ENCODE measurements at regions of chr17 and their contacts with region 1.

Region 1: GRCh38 chr17:55549140-55549539 is 37.9 kb upstream of the SMIM36 start:
- DNase-seq: peak; percentile 47
- H3K4me3 Mint-ChIP-seq: no peak overlapping the region
- H3K27ac Mint-ChIP-seq: no peak overlapping the region
- H3K4me1 Mint-ChIP-seq: peaks cover 16% of the 10 kb centered on the region
- H3K27me3 Mint-ChIP-seq: no peaks in the 10 kb centered on the region
- CTCF ChIP-seq: no peak

Region 2: DNA sequence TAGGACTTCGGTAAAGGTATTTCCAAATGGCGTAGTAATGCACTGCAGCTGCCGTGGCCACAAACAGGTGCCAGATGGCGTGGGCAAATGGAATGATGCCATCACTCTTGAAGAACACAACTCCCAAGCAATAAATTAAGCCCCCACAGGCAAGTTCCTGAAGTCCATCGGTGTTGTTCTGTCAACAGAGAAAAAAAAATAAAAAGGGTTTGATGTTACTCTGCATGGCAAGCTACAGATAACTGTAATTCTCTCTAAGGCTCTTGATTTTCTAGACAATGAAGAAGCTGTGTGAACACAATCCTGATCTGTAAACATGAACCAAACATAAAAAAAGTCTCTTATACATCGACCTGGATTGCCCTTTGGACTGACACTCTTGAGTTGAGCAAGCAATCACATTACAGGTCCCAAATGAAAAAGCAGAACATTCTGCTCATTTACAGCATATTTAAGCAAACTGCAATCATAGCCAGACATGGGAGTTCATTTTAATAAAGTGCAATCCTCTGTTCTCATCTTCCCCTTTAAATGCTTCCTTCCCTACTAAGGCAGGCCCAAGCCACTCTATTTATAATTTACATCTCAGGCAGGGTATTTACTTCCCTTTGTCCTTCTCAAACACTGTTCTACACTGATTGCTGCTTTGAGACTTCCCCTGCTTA is 154.7 kb before region 1 on chr17:
- CTCF ChIA-PET with region 1: no interaction called
- POLR2A ChIA-PET with region 1: no interaction called
- intact Hi-C with region 1: no loop called
- DNase-seq: no peak
- H3K4me3 Mint-ChIP-seq: no peak overlapping the region
- H3K27ac Mint-ChIP-seq: no peak overlapping the region
- H3K4me1 Mint-ChIP-seq: no peaks in the 10 kb centered on the region
- H3K27me3 Mint-ChIP-seq: no peaks in the 10 kb centered on the region
- CTCF ChIP-seq: no peak

Region 3: DNA sequence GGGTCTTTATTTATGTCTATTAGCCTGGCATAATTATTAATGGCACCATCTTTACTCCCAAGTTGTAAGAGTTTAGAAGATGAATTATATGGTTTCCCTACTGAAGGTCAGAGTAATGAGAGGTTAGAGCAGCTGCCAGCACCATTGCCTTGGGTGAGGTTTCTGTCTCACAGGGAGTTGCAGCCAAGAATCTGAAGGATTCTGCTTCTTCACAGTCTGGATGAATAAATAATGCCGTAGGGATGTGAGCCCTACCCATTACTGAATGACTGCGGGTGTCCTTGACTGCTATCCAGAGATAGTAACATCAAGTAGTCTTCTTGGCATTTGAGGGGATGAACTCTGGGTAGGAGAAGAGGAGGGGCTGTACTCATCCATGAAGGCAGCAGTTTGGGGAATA is 14.9 kb after region 1 on chr17:
- CTCF ChIA-PET with region 1: no interaction called
- POLR2A ChIA-PET with region 1: no interaction called
- intact Hi-C with region 1: no loop called
- DNase-seq: no peak
- H3K4me3 Mint-ChIP-seq: no peak overlapping the region
- H3K27ac Mint-ChIP-seq: no peak overlapping the region
- H3K4me1 Mint-ChIP-seq: no peaks in the 10 kb centered on the region
- H3K27me3 Mint-ChIP-seq: no peaks in the 10 kb centered on the region
- CTCF ChIP-seq: no peak

Region 4: GRCh38 chr17:55587608-55588139 is 38.5 kb after region 1 on chr17:
- CTCF ChIA-PET with region 1: no interaction called
- POLR2A ChIA-PET with region 1: no interaction called
- intact Hi-C with region 1: loop called (anchors 5 kb)
- DNase-seq: no peak
- H3K4me3 Mint-ChIP-seq: no peak overlapping the region
- H3K27ac Mint-ChIP-seq: peak overlapping the region; percentile 52
- H3K4me1 Mint-ChIP-seq: peaks cover 23% of the 10 kb centered on the region
- H3K27me3 Mint-ChIP-seq: no peaks in the 10 kb centered on the region
- CTCF ChIP-seq: no peak